ENCODE measurements at regions of chr18 and their contacts with region 1.

Region 1: GRCh38 chr18:79590191-79591031 is 89.2 kb upstream of the CTDP1 start:
- DNase-seq: no peak
- H3K4me3 ChIP-seq: no peak overlapping the region
- H3K27ac ChIP-seq: no peak overlapping the region
- H3K4me1 ChIP-seq: no peaks in the 10 kb centered on the region
- CTCF ChIP-seq: no peak

Region 2: DNA sequence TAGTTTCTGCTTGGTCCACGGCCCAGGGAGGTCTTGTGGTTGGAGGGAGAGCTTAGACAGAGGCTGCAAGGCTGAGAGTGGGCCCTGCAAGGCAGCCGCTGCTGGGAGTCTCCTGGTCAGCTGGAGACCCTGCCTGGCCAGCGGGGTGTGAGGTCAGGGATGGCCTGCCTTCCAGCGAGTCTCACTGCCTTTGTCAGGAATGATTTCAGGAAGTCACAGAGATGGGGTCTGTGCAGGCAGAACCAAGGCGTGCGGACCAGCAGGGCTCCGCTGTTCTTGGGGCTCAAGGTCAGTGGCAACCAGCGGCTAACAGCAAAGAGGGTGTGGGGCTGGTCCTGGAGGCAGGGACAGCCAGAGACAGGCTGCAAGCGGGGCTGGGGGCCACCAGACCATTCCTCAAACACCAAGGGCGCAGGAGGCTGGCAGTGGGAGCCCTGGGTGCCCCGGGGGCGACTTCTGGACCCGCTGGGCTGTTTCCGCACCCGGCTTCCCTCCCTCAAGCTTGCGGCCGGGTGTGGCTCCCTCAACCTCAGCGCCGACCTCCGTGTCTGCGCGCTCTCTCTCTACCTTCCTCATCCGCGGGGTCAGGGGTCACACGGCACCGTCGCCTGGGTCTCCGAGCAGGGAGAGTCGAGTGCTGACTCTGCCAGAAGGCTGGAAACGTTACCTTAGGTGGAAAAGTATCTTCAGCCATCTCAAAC is 35.3 kb before region 1 on chr18:
- CTCF ChIA-PET with region 1: interaction called, 12 read pairs
- POLR2A ChIA-PET with region 1: no interaction called
- intact Hi-C with region 1: no loop called
- DNase-seq: no peak
- H3K4me3 ChIP-seq: no peak overlapping the region
- H3K27ac ChIP-seq: no peak overlapping the region
- H3K4me1 ChIP-seq: no peaks in the 10 kb centered on the region
- CTCF ChIP-seq: no peak

Region 3: GRCh38 chr18:79765491-79766245 is 175.3 kb after region 1 on chr18:
- CTCF ChIA-PET with region 1: no interaction called
- POLR2A ChIA-PET with region 1: no interaction called
- intact Hi-C with region 1: loop called (anchors 5 kb)
- DNase-seq: no peak
- H3K4me3 ChIP-seq: no peak overlapping the region
- H3K27ac ChIP-seq: no peak overlapping the region
- H3K4me1 ChIP-seq: no peaks in the 10 kb centered on the region
- CTCF ChIP-seq: no peak

Measured in OCI-LY7 (cell line).